GM10248 (cell line): ENCODE measurements at regions of chr12 and their contacts with region 1.

Region 1: DNA sequence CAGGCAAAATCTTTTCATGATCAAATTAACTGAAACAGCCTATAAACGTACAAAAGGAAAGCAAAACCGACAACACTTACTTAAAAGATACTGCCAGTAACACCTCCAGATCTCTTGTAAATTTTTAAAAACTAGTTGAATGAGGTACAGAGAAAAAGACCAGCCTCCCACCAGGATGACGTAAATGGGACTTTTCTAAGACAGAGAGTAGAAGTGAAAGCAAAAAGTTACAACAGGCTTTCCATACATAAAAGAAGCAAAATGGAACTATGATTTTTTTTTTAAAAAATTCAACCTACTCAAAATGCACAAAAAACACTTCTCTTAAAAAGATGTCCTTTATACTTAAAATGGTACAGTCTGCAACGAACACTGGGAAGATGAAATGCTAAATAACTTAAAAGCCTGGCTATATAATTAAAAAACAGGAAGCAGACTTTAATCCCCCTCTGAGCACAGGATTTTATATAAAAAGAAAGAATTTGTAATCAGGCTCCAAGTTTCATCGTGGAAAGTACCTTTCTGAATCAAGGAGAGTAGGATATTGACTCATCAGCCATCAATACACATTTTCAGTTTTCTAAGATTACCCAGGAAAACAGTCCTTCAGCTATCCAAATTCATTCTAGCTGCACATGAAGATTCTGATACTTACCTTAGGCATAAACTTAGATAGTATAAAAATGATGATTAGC is 14.2 kb upstream of the MYO1A start:
- DNase-seq: peak; percentile 79
- CTCF ChIP-seq: no peak

Region 2: GRCh38 chr12:57078519-57079404 is 14.6 kb after region 1 on chr12 and contains the start of gene NEMP1:
- CTCF ChIA-PET with region 1: interaction called, 48 read pairs
- POLR2A ChIA-PET with region 1: interaction called, 5 read pairs
- DNase-seq: peak; percentile 96
- CTCF ChIP-seq: no peak